ENCODE measurements at regions of chr3 and their contacts with region 1.

Region 1: GRCh38 chr3:37855363-37855970 is 6.2 kb upstream of the CTDSPL start:
- DNase-seq: peak; percentile 66 to 78 (median 66)
- H3K4me3 ChIP-seq: no peak overlapping the region
- H3K27ac ChIP-seq: no peak overlapping the region
- H3K4me1 ChIP-seq: peaks cover 0 to 11% (median 9%) of the 10 kb centered on the region in 4 experiments
- H3K27me3 ChIP-seq: no peaks in the 10 kb centered on the region

Region 2: DNA sequence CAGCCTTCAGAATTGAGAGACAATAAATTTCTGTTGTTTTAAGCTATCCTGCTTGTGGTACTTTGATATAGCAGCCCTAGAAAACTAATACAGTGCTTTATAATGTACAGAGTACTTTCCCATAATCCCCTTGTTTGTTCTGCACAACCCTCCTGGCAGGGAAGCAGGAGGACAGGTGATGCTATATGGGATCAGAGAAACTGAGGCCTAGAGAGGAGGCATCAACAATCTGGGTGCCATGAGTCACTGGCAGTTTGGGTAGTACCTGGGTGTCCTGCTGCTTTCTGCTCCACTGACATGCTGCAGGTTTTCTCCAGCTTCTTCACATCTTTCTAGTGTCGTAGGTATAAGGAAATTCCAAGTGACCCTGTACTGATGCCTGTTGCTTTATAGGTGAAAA is 61.2 kb after region 1 on chr3:
- CTCF ChIA-PET with region 1: interaction called, 20 read pairs
- POLR2A ChIA-PET with region 1: no interaction called
- DNase-seq: no peak
- H3K4me3 ChIP-seq: no peak overlapping the region
- H3K27ac ChIP-seq: no peak overlapping the region
- H3K4me1 ChIP-seq: peaks cover 0 to 58% (median 33%) of the 10 kb centered on the region in 4 experiments
- H3K27me3 ChIP-seq: no peaks in the 10 kb centered on the region

Region 3: GRCh38 chr3:37922721-37923568 is 67.5 kb after region 1 on chr3:
- CTCF ChIA-PET with region 1: interaction called, 12 read pairs
- POLR2A ChIA-PET with region 1: no interaction called
- DNase-seq: peak; percentile 83 to 97 (median 94)
- H3K4me3 ChIP-seq: peak overlapping the region in 1 of 7 experiments; percentile 42
- H3K27ac ChIP-seq: peak overlapping the region; percentile 52 to 64
- H3K4me1 ChIP-seq: peaks cover 10 to 82% (median 55%) of the 10 kb centered on the region in 4 experiments
- H3K27me3 ChIP-seq: no peaks in the 10 kb centered on the region

Region 4: DNA sequence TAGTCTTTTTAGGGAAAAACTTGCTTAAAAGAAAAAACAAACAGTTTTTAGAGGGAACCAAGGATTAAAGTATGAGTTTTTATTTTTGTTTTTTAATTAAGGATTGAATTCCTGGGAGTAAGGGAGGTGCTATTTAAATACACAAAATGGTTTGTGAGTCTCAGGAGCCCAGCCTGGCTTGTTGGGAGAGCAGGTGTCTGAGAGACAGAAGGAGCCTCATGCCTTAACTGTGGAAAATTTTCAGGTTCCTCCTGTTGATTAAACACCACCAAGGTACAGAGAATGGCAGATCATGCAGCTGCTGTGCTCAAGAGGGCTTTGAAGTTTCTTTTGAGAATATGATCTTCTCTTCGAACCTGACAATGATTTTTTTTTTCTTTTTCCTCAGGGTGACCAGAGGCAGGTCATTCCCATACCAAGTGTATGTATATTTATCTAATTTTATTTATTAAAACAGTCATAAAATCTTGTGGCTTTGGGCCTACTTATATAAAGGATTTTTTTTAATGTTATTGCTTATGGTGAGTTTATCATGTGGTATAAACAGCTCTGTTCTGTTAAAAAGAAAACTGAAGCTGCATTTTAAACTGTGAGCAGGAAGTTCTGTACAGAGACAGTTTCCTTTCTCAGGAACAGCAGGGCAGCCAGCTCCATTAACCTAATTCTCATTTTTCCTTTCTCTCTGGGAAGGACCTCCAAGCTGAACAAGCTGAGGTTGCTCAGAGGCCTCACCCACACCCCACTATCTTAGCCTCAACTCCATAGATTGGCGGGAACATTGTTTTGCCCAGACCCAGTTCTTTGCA is 101.5 kb after region 1 on chr3:
- CTCF ChIA-PET with region 1: interaction called, 23 read pairs
- POLR2A ChIA-PET with region 1: no interaction called
- DNase-seq: peak in 2 of 3 donors; percentile 38 to 47
- H3K4me3 ChIP-seq: peak overlapping the region in 4 of 7 experiments; percentile 7 to 54 (median 36)
- H3K27ac ChIP-seq: peak overlapping the region; percentile 58 to 78
- H3K4me1 ChIP-seq: peaks cover 17 to 63% (median 40%) of the 10 kb centered on the region in 4 experiments
- H3K27me3 ChIP-seq: no peaks in the 10 kb centered on the region

Region 5: DNA sequence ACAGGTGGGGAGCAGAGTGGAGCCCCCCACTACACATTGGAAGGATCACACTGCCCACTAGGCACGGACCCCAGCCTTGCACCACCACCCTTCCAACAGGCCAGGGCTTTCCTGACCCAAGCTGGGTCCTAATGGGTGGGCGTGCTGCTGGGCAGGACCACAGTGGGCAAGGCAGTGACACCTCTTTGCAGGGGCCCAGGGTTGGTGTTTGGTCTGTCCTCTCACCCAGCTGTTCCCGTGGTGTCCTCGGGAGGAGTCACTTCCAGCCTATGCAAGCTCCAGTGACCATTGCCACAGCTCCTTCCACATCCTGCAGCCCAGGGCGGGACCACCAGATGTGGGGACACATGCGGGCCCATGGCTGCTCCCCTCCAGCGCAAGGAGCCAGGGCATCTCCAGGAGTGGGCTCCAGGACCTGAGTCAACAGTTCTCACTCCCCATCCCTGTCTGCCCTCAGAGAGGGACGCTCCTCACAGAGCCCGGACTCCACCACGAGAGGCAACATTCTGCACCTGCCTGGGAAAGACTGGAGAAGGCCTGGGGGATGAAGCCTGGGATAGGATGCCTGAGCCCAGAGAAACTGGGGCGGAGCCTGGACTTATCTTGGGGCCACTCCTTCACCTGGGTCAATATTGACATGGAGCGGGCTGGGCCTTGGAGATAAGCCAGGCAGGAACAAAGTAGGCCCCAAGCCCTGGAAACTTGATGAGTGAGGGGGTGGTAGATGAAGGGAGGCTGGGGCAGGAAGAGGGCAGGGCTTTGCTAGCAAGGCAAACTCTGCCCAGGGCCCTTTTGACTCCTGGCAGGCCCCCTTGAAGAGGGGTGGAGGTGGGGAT is 131.2 kb after region 1 on chr3:
- CTCF ChIA-PET with region 1: interaction called, 11 read pairs
- POLR2A ChIA-PET with region 1: no interaction called
- DNase-seq: peak in 2 of 3 donors; percentile 42 to 56
- H3K4me3 ChIP-seq: no peak overlapping the region
- H3K27ac ChIP-seq: peak overlapping the region in 1 of 2 experiments; percentile 50
- H3K4me1 ChIP-seq: peaks cover 0 to 9% (median 3%) of the 10 kb centered on the region in 4 experiments
- H3K27me3 ChIP-seq: no peaks in the 10 kb centered on the region

Region 6: GRCh38 chr3:38149708-38150107 is 294.2 kb after region 1 on chr3:
- CTCF ChIA-PET with region 1: no interaction called
- POLR2A ChIA-PET with region 1: no interaction called
- DNase-seq: peak; percentile 69 to 88 (median 80)
- H3K4me3 ChIP-seq: peak overlapping the region in 2 of 7 experiments; percentile 20 to 48
- H3K27ac ChIP-seq: peak overlapping the region in 1 of 2 experiments; percentile 19
- H3K4me1 ChIP-seq: peaks cover 9 to 49% (median 27%) of the 10 kb centered on the region in 4 experiments
- H3K27me3 ChIP-seq: no peaks in the 10 kb centered on the region

Measured in common myeloid progenitor, CD34-positive (primary cell).